Mammary epithelial cell (primary cell): ENCODE measurements at regions of chr10 and their contacts with region 1.

Region 1: DNA sequence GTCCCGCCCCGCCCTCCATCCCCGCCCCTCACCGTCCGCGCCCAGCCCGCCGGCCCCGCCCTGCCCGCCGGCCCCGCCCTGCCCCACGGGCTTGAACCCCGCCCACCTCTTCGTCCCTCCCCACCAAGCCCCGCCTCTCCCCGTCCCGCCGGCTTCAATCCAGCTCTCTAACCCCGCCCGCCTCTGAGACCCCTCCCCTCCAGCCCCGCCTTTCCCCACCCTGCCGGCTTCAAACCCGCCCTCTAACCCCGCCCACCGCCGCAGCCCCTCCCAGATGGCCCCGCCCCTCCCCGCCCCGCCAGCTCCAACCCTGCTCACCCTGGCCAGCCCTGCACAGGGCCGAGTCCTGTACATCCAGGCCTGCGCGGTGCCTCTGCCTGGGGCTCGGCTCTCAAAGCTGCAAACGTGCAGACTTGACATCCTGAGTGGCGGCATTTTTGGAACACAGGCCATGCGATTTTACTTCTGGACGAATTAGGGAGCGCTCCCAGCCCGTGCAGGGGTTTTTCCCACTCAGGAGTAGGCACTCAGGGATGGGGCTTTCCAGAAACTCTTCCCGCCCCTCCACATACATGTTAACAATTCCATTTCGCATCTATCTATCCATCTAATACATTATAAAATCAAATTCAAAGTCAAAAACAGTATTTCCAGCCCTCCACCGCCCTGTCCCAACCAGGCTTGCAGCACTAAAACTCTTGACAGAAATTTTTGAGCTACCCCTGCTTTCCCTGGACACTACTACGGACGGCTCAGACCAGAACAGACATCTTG is 475 bp upstream of the NMT2 start:
- DNase-seq: peak; percentile 87
- H3K4me3 ChIP-seq: peak overlapping the region in 1 of 3 experiments; percentile 16
- H3K27ac ChIP-seq: no peak overlapping the region
- H3K4me1 ChIP-seq: peaks cover 28% of the 10 kb centered on the region
- H3K27me3 ChIP-seq: no peaks in the 10 kb centered on the region
- CTCF ChIP-seq: no peak

Region 2: GRCh38 chr10:15123749-15124184 is 45.2 kb before region 1 on chr10:
- CTCF ChIA-PET with region 1: no interaction called
- dilution Hi-C with region 1: no loop called
- in situ Hi-C with region 1: no loop called
- intact Hi-C with region 1: loop called (anchors 2 kb)
- DNase-seq: peak; percentile 92
- H3K4me3 ChIP-seq: no peak overlapping the region
- H3K27ac ChIP-seq: peak overlapping the region; percentile 11
- H3K4me1 ChIP-seq: peaks cover 26% of the 10 kb centered on the region
- H3K27me3 ChIP-seq: no peaks in the 10 kb centered on the region
- CTCF ChIP-seq: no peak

Region 3: DNA sequence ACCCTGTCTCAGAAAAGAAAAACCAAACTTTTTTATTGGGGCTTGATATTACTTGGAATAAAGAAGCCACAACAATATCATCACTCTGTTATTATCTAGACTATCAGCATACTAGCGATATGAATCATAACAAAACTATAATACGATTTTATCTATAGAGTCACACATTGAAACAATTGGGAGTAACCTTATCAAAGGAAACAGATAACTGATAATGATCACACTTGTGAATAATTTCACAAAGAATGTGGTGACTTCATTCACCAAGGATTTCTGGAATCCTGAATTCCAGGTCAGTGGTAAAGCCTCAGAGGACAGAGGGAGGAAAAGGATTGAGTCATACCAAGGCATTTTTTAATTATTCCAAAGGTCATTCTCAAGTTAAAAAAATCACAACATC is 31.7 kb after region 1 on chr10:
- CTCF ChIA-PET with region 1: interaction called, 3 read pairs
- dilution Hi-C with region 1: no loop called
- in situ Hi-C with region 1: no loop called
- intact Hi-C with region 1: loop called (anchors 2 kb)
- DNase-seq: peak; percentile 78
- H3K4me3 ChIP-seq: no peak overlapping the region
- H3K27ac ChIP-seq: peak overlapping the region; percentile 8
- H3K4me1 ChIP-seq: peaks cover 36% of the 10 kb centered on the region
- H3K27me3 ChIP-seq: no peaks in the 10 kb centered on the region
- CTCF ChIP-seq: no peak

Region 4: DNA sequence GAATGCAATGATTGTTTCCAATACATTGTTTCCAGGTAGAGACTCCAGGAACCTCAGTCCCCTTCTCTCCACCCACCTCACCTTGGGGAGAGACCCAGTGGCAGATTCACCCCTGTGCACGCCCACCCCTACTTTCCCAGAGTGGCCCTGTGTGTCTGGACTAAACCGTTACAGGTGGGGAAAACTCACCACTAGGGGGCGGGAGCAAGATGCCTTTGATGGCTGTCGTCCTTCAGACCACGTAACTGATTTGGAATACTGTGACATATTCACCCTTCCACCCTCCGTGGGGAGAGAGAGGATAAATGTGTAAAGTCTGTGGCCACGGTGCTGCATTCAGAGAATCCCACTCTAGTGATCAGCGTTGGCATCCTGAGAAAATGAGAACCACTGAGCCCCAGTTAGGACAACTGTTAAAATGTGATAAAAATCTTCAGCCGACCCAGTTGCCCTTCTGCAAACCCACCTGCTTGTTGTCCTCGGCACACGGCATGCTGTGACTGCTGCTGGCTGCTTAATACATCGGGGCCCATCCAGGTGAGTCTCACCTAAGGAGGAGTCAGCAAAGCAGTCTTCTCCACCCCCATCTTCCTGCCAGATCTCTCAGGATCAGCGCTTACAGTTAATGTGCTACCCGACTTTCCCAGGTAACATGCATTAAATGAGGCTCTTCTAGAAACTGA is 41.0 kb after region 1 on chr10:
- CTCF ChIA-PET with region 1: no interaction called
- dilution Hi-C with region 1: no loop called
- in situ Hi-C with region 1: no loop called
- intact Hi-C with region 1: loop called (anchors 2 kb)
- DNase-seq: peak; percentile 34
- H3K4me3 ChIP-seq: no peak overlapping the region
- H3K27ac ChIP-seq: no peak overlapping the region
- H3K4me1 ChIP-seq: peaks cover 4% of the 10 kb centered on the region
- H3K27me3 ChIP-seq: no peaks in the 10 kb centered on the region
- CTCF ChIP-seq: peak; percentile 82 to 88

Region 5: GRCh38 chr10:15262036-15262713 is 93.2 kb after region 1 on chr10:
- CTCF ChIA-PET with region 1: no interaction called
- dilution Hi-C with region 1: no loop called
- in situ Hi-C with region 1: no loop called
- intact Hi-C with region 1: no loop called
- DNase-seq: no peak
- H3K4me3 ChIP-seq: no peak overlapping the region
- H3K27ac ChIP-seq: no peak overlapping the region
- H3K4me1 ChIP-seq: no peaks in the 10 kb centered on the region
- H3K27me3 ChIP-seq: no peaks in the 10 kb centered on the region
- CTCF ChIP-seq: peak; percentile 5 to 32

Region 6: GRCh38 chr10:15370856-15371701 is 202.1 kb after region 1 on chr10 and contains the start of gene FAM171A1:
- CTCF ChIA-PET with region 1: interaction called, 6 read pairs
- dilution Hi-C with region 1: no loop called
- in situ Hi-C with region 1: no loop called
- intact Hi-C with region 1: loop called (anchors 5 kb)
- DNase-seq: peak; percentile 56
- H3K4me3 ChIP-seq: peak within 1 kb of the TSS; percentile 65 to 87 (median 68)
- H3K27ac ChIP-seq: no peak within 1 kb of the TSS
- H3K4me1 ChIP-seq: peaks cover 4% of the 10 kb centered on the region
- H3K27me3 ChIP-seq: no peaks in the 10 kb centered on the region
- CTCF ChIP-seq: peak in 1 of 2 donors; percentile 17
- total RNA-seq, gene FAM171A1: 15.5 to 25.2 TPM